ENCODE measurements at regions of chr4 and their contacts with region 1.

Region 1: GRCh38 chr4:103091601-103092223 is 7.9 kb downstream of the BDH2 start:
- DNase-seq: peak in 4 of 5 donors; percentile 10 to 55 (median 48)
- H3K4me3 ChIP-seq: no peak overlapping the region
- H3K4me3 Mint-ChIP-seq: no peak overlapping the region
- H3K27ac ChIP-seq: no peak overlapping the region
- H3K27ac Mint-ChIP-seq: no peak overlapping the region
- H3K4me1 ChIP-seq: no peaks in the 10 kb centered on the region
- H3K4me1 Mint-ChIP-seq: peaks cover 4 to 20% (median 19%) of the 10 kb centered on the region in 3 donors
- H3K27me3 ChIP-seq: no peaks in the 10 kb centered on the region
- H3K27me3 Mint-ChIP-seq: no peaks in the 10 kb centered on the region

Region 2: GRCh38 chr4:102430461-102430910 is 661.2 kb before region 1 on chr4:
- CTCF ChIA-PET with region 1: interaction called, 14 read pairs
- POLR2A ChIA-PET with region 1: no interaction called
- DNase-seq: no peak
- H3K4me3 ChIP-seq: peak overlapping the region; percentile 83
- H3K4me3 Mint-ChIP-seq: peak overlapping the region; percentile 83 to 97 (median 92)
- H3K27ac ChIP-seq: peak overlapping the region; percentile 62
- H3K27ac Mint-ChIP-seq: peak overlapping the region; percentile 65 to 98 (median 90)
- H3K4me1 ChIP-seq: peaks cover 5% of the 10 kb centered on the region
- H3K4me1 Mint-ChIP-seq: peaks cover 6 to 8% (median 6%) of the 10 kb centered on the region in 3 donors
- H3K27me3 ChIP-seq: no peaks in the 10 kb centered on the region
- H3K27me3 Mint-ChIP-seq: no peaks in the 10 kb centered on the region

Region 3: DNA sequence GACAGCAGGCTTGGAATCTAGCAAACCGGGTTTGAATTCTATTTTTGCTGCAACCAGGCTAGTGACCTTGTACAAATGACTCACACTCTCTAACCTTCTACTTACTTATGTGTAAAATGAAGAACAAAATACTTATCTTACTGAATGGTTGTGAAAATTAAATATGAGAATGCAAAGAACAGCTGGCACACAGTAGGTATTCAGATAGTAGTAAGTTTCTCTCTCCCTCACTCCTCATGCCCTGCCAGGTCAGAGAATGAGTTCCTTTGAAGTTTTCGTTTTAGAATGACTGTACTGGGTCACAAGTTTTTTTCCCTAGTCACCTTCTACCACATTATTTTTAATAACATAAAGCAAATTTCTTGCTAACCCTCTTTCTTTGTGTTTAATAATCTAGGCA is 189.9 kb before region 1 on chr4:
- CTCF ChIA-PET with region 1: no interaction called
- POLR2A ChIA-PET with region 1: no interaction called
- DNase-seq: no peak
- H3K4me3 ChIP-seq: no peak overlapping the region
- H3K4me3 Mint-ChIP-seq: no peak overlapping the region
- H3K27ac ChIP-seq: no peak overlapping the region
- H3K27ac Mint-ChIP-seq: no peak overlapping the region
- H3K4me1 ChIP-seq: no peaks in the 10 kb centered on the region
- H3K4me1 Mint-ChIP-seq: no peaks in the 10 kb centered on the region
- H3K27me3 ChIP-seq: no peaks in the 10 kb centered on the region
- H3K27me3 Mint-ChIP-seq: no peaks in the 10 kb centered on the region

Region 4: GRCh38 chr4:102988429-102989020 is 103.2 kb before region 1 on chr4:
- CTCF ChIA-PET with region 1: no interaction called
- POLR2A ChIA-PET with region 1: no interaction called
- DNase-seq: no peak
- H3K4me3 ChIP-seq: no peak overlapping the region
- H3K4me3 Mint-ChIP-seq: no peak overlapping the region
- H3K27ac ChIP-seq: no peak overlapping the region
- H3K27ac Mint-ChIP-seq: peak overlapping the region in 1 of 8 donors; percentile 64
- H3K4me1 ChIP-seq: no peaks in the 10 kb centered on the region
- H3K4me1 Mint-ChIP-seq: no peaks in the 10 kb centered on the region
- H3K27me3 ChIP-seq: no peaks in the 10 kb centered on the region
- H3K27me3 Mint-ChIP-seq: peaks cover 0 to 1% of the 10 kb centered on the region in 2 donors

Region 5: DNA sequence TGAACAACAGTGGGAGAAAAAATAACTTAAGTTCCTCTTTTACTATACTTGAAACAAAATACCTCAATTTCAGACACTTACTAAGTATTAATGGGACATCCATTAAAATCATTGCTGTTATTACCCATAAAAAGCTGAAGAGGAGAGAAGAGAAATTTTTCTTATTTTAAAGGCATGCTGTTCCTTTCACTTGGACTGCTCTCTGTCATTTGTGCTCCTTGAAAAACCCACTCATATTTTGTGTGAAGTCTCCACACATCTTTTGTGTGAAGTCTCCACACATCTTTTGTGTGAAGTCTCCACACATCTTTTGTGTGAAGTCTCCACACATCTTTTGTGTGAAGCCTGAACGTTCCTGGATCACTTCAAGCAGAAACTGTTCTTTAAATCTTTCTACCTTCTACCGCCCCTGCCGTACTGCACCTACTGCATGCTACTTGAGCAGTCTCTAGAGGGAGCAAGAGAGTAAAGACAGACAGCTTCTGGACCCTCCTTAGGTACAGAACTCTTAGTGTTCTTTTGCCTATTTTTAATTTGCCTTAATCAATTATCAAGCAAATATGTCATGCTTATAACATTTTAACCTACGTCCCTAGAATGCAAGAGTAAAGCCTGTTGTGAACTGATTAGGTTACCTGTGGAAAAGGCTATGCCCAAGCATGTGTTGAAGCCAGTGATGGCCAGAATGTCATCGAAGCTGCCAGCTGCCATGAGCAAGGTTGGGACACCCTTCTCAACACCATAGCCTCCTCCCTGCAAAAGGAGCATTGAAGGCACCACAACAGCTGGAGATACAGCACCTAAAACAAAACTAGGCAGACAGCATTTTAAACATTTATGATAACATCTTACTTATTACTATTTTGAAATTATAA is 45.1 kb before region 1 on chr4:
- CTCF ChIA-PET with region 1: interaction called, 14 read pairs
- POLR2A ChIA-PET with region 1: no interaction called
- DNase-seq: peak in 3 of 5 donors; percentile 47 to 63 (median 50)
- H3K4me3 ChIP-seq: no peak overlapping the region
- H3K4me3 Mint-ChIP-seq: no peak overlapping the region
- H3K27ac ChIP-seq: no peak overlapping the region
- H3K27ac Mint-ChIP-seq: peak overlapping the region in 4 of 8 donors; percentile 11 to 74 (median 64)
- H3K4me1 ChIP-seq: no peaks in the 10 kb centered on the region
- H3K4me1 Mint-ChIP-seq: peaks cover 0 to 8% (median 3%) of the 10 kb centered on the region in 3 donors
- H3K27me3 ChIP-seq: no peaks in the 10 kb centered on the region
- H3K27me3 Mint-ChIP-seq: no peaks in the 10 kb centered on the region

Region 6: GRCh38 chr4:103075901-103076739 is 15.6 kb before region 1 on chr4:
- CTCF ChIA-PET with region 1: interaction called, 12 read pairs
- POLR2A ChIA-PET with region 1: no interaction called
- DNase-seq: peak; percentile 45 to 84 (median 69)
- H3K4me3 ChIP-seq: peak overlapping the region; percentile 49
- H3K4me3 Mint-ChIP-seq: peak overlapping the region; percentile 89 to 99 (median 95)
- H3K27ac ChIP-seq: peak overlapping the region; percentile 94
- H3K27ac Mint-ChIP-seq: peak overlapping the region; percentile 89 to 100 (median 99)
- H3K4me1 ChIP-seq: peaks cover 26% of the 10 kb centered on the region
- H3K4me1 Mint-ChIP-seq: peaks cover 42 to 66% (median 62%) of the 10 kb centered on the region in 3 donors
- H3K27me3 ChIP-seq: no peaks in the 10 kb centered on the region
- H3K27me3 Mint-ChIP-seq: no peaks in the 10 kb centered on the region

Measured in CD8-positive, alpha-beta memory T cell (primary cell).